ENCODE measurements at regions of chr4 and their contacts with region 1.

Region 1: GRCh38 chr4:17576932-17577665 is at the start of gene LAP3:
- DNase-seq: peak; percentile 98 to 100 (median 99)

Region 2: DNA sequence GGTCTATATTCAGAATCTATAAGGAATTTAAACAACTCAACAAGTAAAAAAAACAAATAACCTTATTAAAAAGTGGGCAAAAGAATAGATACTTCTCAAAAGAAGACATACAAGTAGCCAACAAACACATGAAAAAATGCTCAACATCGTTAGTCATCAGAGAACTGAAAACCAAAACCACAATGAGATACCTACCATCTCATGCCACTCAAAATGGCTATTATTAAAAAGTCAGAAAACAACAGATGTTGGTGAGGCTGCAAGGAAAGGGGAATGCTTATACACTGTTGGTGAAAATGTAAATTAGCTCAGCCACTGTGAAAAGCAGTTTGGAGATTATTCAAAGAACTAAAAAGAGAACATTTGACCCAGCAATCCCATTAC is 266.8 kb before region 1 on chr4:
- intact Hi-C with region 1: no loop called
- DNase-seq: no peak

Region 3: DNA sequence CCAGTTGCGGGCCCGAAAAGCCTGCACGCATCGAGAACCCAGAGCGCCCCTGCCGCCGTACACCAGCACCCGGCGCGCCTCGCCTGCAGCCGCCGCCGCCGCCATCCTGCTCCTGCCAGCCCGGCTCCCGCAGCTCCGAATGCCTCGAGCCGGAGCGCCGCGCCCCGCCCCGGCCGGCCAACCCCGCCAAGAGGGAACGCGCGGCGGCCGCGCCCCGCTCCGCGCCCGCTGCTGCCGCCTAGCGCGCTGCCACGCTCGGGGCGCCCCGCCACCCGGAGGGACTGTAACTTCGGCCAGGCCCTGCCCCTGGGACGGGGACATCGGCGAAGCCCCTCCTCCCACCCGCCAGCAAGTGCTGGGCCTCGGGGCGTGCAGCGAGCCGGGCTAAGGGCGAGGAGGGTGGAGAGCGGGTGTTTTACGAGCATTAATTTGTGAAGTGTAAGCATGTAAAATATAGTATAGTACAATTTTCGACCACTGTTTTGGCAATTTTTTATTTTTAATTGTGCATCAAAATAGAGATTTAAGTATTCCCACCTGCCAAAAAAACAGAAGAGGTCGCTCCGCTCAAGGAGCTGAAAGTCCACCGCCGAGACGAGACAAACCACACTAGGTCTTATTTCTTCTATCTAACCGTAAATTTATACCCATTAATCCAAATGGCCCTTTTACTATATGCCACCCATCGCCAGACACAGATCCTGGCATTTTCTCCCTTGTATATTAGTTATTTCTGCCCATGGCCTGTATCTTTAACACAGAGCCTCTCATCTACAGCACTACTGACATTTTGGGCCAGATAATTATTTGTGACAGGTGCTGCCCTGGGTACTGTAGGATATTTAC is 64.9 kb before region 1 on chr4 and contains the start of gene QDPR:
- intact Hi-C with region 1: loop called (anchors 2 kb)
- DNase-seq: peak; percentile 74 to 97 (median 92)

Region 4: DNA sequence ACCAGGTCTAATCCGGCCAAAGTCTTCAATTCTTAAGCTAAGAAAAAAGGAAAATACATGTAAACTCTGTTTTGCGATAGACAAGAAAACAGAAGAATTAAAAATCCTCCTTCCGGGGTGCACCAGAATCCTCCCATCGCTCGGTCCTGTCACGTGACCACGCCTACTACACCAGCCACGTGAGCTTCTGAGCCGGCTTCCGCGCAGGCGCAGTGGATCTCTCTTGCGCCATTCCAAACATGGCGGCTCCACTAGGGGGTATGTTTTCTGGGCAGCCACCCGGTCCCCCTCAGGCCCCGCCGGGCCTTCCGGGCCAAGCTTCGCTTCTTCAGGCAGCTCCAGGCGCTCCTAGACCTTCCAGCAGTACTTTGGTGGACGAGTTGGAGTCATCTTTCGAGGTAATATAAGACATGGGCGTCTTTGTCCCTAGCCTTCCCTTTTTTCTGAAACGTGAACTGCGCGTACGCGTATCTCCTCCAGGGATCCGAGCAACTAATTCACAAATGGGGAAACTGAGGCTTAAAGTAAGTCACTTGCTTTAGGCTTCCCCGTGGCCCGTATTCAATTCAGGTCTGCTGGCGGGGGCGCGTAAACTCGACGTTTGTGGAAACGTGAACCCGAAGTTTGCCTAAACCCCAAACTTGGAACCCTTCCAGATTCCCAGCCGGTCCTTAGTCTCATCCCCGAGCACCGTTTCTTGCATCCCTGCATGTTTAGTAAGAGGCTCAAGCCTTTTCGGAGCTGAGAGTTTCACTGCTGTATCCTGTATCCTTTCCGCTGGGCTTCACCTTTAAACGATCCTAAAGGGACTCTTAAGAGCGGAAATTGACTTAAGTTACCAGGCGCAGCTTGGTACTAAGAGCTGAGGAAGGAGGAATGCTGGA is 37.6 kb after region 1 on chr4 and contains the start of gene MED28:
- intact Hi-C with region 1: loop called (anchors 1 kb)
- DNase-seq: peak; percentile 86 to 99 (median 96)

Region 5: DNA sequence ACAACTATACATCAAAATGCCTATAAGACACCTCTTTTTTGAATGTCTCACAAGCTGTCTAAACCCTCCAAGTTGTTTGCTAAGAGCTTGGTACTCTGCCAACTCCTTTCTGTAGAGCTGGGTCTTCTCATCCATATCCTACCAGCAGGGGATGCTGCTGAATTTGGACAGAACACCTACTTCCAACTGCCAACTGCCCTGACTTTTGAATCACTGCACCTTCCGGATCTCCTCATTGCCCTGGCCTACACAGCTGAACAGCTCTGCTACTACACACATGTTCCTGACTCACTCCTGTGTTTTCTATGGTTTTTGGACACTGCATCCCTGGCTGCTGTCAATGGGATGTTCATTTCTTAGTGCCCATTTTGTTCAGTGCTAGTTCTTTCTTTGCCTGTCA is 185.6 kb after region 1 on chr4:
- intact Hi-C with region 1: no loop called
- DNase-seq: peak in 1 of 42 donors; percentile 41

Region 6: GRCh38 chr4:18021722-18022571 is 444.8 kb after region 1 on chr4 and contains the start of gene LCORL:
- intact Hi-C with region 1: loop called (anchors 5 kb)
- DNase-seq: peak; percentile 87 to 98 (median 95)